Ovary (tissue), 10 donors: ENCODE measurements at regions of chr19 and their contacts with region 1.

Region 1: GRCh38 chr19:46860125-46860845 is 512 bp upstream of the ARHGAP35 start:
- DNase-seq: peak; percentile 96 to 99 (median 97)
- H3K4me3 ChIP-seq: peak overlapping the region; percentile 59
- H3K27ac ChIP-seq: peak overlapping the region; percentile 95 to 97
- H3K4me1 ChIP-seq: peaks cover 17% of the 10 kb centered on the region
- H3K27me3 ChIP-seq: no peaks in the 10 kb centered on the region
- CTCF ChIP-seq: peak in 2 of 3 donors; percentile 17 to 37
- EP300 ChIP-seq: no peak
- POLR2A ChIP-seq: peak; percentile 65

Region 2: DNA sequence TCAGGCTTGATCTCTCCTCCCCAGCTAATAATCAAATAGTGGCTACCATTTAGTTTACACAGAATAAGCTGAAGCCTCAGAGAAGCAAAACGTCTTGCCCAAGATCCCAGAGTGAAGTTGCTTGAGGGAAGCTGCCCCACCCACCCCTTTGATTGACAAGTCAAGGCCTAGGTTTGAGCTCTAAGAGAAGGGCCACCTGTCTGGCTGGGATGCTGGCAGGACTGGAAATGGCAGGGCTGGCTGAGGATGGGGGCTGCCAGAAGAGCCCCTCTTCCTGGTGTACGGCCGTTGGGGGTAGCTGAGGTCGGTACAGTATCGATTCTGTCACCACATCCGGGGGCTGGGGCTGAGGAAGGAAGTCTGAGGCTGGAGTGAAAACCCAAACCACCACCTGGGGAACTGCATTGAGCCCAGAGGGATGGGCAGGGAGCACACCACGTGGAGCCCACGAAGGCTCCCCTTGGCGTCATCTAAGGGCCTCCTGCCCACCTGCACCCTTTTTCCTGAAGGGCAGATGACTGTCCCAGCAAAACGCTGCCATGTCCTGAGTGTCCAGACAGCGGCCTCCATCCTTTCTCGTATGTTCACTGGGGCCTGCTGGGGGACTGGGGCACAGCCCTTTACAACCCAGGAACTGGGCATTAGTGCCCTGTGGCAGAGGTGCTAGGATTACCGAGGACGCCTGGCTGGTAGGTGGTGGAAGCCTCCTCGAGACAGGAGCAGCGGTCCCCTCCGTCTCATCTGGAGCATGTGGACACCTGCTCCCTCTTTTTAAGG is 141.9 kb before region 1 on chr19:
- intact Hi-C with region 1: no loop called
- DNase-seq: no peak
- H3K4me3 ChIP-seq: no peak overlapping the region
- H3K27ac ChIP-seq: peak overlapping the region; percentile 95
- H3K4me1 ChIP-seq: peaks cover 5% of the 10 kb centered on the region
- H3K27me3 ChIP-seq: no peaks in the 10 kb centered on the region
- CTCF ChIP-seq: no peak
- EP300 ChIP-seq: no peak
- POLR2A ChIP-seq: no peak

Region 3: DNA sequence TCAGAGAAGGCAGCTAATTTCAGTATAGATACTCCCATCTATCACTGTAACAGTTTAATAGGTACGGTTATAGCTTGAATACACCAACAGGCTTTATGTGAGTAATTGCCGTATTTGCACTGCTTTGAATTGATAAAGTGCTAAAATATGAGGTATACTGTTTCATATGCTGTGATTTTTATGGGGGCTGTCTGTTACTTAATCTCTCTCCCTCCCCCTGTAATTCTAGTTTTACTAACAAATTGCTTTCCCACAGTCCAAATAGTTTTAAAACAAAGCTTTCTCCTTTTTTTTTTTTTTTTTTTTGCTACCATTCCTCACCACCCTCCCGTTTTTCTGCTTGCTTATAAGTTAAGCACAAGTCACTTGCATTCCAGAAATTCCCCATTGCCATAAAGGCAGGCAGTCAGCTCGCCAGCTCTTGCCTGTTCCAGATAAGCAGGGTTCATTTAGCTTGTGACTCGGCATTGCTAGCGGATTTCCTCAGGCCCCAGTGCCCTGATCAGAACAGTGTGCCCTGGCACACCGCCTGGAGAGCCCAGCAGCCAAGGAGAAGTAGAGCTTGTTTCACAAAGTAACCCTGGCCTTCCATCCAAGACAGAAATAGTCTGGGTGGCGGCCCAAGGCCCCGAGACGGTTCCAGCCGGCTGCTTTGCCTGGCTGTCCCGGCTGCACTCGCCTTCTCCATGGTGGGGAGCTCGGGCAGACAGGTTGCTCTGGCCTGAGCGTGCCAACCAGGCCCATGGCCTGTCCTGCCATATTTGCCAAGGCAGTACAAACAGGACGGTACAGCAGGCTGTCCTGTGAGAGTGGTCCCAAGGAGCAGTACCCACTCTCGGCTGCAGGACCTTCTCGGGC is 115.9 kb after region 1 on chr19:
- intact Hi-C with region 1: loop called in 3 of 4 experiments (anchors 5 kb)
- DNase-seq: peak; percentile 89 to 96 (median 92)
- H3K4me3 ChIP-seq: no peak overlapping the region
- H3K27ac ChIP-seq: peak overlapping the region in 1 of 2 donors; percentile 36
- H3K4me1 ChIP-seq: peaks cover 24% of the 10 kb centered on the region
- H3K27me3 ChIP-seq: no peaks in the 10 kb centered on the region
- CTCF ChIP-seq: no peak
- EP300 ChIP-seq: no peak
- POLR2A ChIP-seq: no peak

Region 4: DNA sequence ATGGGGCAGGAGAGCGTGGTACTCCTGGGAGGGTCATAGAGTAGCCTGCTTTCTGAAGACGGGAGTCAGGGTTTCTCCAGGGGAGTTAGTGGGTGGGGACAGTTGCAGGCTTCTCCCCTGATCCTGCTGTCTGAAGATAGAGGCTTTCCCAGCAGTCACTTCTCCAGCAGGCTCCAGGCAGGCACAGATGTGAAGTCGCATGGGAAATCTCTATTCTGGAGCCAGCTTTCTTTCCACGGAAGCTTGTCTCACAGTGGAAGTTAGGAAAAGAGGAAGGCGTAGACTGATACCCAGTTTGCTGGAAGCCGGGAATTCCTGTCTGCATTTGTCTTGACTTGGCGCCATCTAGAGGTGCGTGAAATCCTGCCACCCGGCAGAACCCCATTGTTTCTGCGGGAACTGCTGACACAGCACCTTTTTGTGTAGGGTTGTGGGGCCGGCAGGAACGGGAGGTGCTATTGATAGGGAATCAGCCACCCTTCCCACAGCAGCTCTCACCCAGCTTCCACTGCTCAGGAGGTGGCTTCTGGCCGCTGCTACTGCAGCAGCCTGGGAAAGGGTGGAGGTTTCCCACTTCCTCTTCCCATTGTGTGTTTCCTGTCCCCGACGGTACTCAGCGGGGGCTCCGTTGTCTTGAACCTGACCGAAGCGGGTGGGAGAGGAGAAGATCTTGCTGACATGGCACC is 130.8 kb after region 1 on chr19:
- intact Hi-C with region 1: loop called (anchors 2 to 5 kb)
- DNase-seq: peak; percentile 88 to 91 (median 90)
- H3K4me3 ChIP-seq: no peak overlapping the region
- H3K27ac ChIP-seq: peak overlapping the region in 1 of 2 donors; percentile 76
- H3K4me1 ChIP-seq: peaks cover 24% of the 10 kb centered on the region
- H3K27me3 ChIP-seq: no peaks in the 10 kb centered on the region
- CTCF ChIP-seq: peak; percentile 68 to 89 (median 89)
- EP300 ChIP-seq: no peak
- POLR2A ChIP-seq: no peak